Gastrocnemius medialis (tissue), 4 donors: ENCODE measurements at regions of chr21 and their contacts with region 1.

Region 1: GRCh38 chr21:34888569-34889319 is 160.4 kb downstream of the RUNX1 start:
- DNase-seq: peak; percentile 93 to 95
- ATAC-seq: peak; percentile 74 to 78
- H3K4me3 ChIP-seq: peak overlapping the region; percentile 69 to 95 (median 72)
- H3K27ac ChIP-seq: peak overlapping the region; percentile 76 to 91 (median 82)
- H3K4me1 ChIP-seq: peaks cover 12 to 30% of the 10 kb centered on the region in 2 donors
- H3K27me3 ChIP-seq: peaks cover 24 to 51% (median 51%) of the 10 kb centered on the region in 3 donors
- CTCF ChIP-seq: peak in 3 of 5 experiments; percentile 9 to 11 (median 10)
- POLR2A ChIP-seq: peak; percentile 94 to 97

Region 2: DNA sequence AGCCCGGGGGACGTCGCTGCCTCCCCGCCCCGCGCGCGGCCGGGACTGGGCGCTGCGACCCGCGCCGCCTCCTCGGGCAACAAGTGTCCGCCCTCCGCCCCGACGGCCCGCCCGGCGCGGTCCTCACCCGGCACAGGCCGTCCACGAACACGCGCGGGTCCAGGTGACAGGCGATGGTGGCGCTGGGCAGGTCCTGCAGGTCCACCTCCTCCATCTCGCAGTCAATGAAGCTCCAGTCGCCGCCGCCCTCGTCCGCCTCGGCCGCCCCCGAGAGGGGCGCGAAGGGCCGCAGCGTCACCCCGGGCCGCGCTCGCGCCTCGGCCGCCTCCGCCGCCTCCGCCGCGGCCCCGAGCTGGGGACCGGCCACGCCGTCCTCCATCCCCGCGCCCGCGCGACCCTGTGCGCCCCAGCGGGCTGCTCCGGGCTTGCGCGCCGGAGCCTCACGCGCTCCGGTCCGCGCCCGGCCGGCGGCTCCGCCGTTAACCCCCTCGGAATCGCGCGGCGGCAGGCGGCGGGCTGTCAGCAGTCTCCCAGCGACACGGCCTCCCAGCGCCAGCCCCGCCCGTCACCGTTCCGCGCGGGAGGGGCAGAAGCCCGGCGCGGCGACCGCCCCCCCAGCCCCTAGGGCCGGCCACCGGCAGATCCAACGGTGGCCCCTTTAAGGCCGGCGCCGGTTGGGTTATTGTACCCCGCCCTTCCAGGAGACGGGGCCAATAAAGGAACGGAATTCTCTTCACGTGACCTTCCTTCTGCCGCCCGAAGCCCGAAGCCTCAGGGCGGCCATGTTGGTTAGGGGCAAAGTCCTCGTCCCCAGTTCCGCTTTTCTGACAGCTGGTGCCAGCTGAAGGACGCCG is 273.9 kb before region 1 on chr21 and contains the start of gene RCAN1:
- in situ Hi-C with region 1: no loop called
- intact Hi-C with region 1: loop called (anchors 10 kb)
- DNase-seq: peak; percentile 89 to 94
- ATAC-seq: peak; percentile 98
- H3K4me3 ChIP-seq: peak within 1 kb of the TSS; percentile 56 to 73 (median 63)
- H3K27ac ChIP-seq: peak within 1 kb of the TSS; percentile 80 to 91 (median 88)
- H3K4me1 ChIP-seq: peaks cover 19 to 36% of the 10 kb centered on the region in 2 donors
- H3K27me3 ChIP-seq: no peaks in the 10 kb centered on the region
- CTCF ChIP-seq: peak in 1 of 5 experiments; percentile 13
- POLR2A ChIP-seq: peak; percentile 75 to 80
- total RNA-seq, gene RCAN1: 21.7 to 37.9 (median 33.2) TPM

Region 3: DNA sequence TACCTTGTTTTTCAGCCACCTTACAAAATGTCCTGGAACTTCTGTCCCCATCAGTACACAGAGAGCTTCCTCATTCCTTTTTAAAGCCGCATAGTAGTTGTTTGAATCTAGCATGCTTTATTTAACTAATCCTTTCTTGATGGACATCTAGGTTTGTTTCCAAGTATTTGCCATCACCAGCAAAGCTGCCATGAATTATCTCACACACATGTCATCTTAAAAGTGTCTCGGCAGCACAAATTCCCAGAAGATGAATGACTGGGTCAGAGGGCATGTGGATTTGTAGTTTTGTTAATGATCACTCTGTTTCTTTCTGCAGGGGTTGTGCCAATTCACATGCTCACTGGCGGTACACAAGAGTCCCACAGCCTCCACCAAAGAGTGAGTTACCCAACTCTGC is 151.6 kb before region 1 on chr21:
- in situ Hi-C with region 1: loop called in 1 of 4 experiments (anchors 10 kb)
- intact Hi-C with region 1: loop called (anchors 1 kb)
- DNase-seq: peak in 1 of 2 donors; percentile 9
- ATAC-seq: peak in 1 of 2 donors; percentile 57
- H3K4me3 ChIP-seq: no peak overlapping the region
- H3K27ac ChIP-seq: peak overlapping the region; percentile 42 to 90 (median 78)
- H3K4me1 ChIP-seq: peaks cover 23 to 41% of the 10 kb centered on the region in 2 donors
- H3K27me3 ChIP-seq: no peaks in the 10 kb centered on the region
- CTCF ChIP-seq: no peak
- POLR2A ChIP-seq: no peak

Region 4: DNA sequence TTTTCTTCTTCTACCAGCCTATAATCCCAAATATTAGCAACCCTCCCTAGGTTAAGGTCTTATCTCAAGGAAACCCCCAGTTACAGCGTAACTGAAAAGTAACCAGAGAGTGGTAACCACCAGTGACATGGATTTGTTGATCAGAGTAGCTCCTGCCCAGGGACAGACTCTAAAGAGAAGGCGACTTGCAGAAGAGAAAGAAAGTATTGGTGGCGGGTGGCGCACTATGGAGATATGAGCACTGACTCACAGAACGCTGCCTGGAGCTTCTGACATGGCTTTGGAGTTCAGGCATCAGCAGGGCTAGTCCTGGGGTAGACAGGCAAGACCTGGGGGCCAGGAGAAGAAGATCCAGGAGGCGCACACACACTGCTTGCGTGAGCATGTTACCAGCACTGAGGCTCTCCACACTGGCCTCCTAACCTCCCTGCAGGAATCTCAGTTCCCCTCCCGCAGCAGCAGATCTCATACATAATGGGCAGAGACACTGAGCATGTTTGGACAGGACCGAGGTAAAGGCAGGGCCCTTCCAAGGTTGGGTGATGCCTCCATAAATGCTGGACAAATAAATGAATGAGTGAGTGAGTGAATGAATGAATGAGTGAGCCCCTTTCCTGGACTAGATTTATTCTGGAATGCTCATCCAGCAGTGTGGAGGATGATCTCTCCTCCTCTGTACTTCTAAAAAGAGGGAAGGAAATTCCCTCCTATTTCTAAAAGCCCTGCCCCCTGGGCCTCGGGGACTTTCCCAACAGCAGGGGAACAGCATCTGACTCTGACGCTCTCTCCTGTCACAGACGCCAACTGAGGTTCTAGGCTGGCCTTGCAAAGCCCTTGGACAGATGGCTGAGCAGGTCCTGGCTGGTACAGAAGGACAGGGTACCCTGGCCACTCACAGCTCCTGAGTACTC is 44.5 kb before region 1 on chr21:
- in situ Hi-C with region 1: no loop called
- intact Hi-C with region 1: loop called (anchors 1 kb)
- DNase-seq: peak; percentile 86 to 93
- ATAC-seq: peak; percentile 65
- H3K4me3 ChIP-seq: peak overlapping the region in 2 of 4 donors; percentile 43 to 49
- H3K27ac ChIP-seq: peak overlapping the region; percentile 85 to 97 (median 92)
- H3K4me1 ChIP-seq: peaks cover 57 to 59% of the 10 kb centered on the region in 2 donors
- H3K27me3 ChIP-seq: no peaks in the 10 kb centered on the region
- CTCF ChIP-seq: no peak
- POLR2A ChIP-seq: peak; percentile 46 to 76

Region 5: GRCh38 chr21:35256467-35256988 is 367.8 kb after region 1 on chr21:
- in situ Hi-C with region 1: no loop called
- intact Hi-C with region 1: loop called (anchors 2 kb)
- DNase-seq: peak; percentile 96 to 99
- ATAC-seq: peak; percentile 82 to 88
- H3K4me3 ChIP-seq: no peak overlapping the region
- H3K27ac ChIP-seq: peak overlapping the region; percentile 84 to 91 (median 87)
- H3K4me1 ChIP-seq: peaks cover 49 to 61% of the 10 kb centered on the region in 2 donors
- H3K27me3 ChIP-seq: no peaks in the 10 kb centered on the region
- CTCF ChIP-seq: no peak
- POLR2A ChIP-seq: no peak

Region 6: DNA sequence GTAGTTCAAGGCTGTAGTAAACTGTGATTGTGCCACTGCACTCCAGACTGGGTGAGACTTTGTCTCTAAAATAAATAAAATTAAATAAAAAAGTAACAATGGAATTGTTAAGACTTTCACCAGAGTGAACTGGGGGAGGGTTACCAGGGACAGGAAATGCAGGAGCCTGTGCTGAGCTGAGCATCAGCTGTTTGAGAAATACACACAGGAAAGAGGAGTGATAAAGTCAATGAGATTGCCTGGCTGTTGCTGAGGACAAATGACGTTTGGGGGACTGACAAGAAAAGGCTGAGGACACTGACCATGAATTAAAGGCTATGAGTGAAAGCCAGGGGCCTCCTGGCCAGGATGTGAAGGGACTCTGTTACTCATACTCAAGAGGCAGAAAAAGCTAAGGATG is 945.2 kb after region 1 on chr21:
- in situ Hi-C with region 1: loop called in 1 of 4 experiments (anchors 10 kb)
- intact Hi-C with region 1: no loop called
- DNase-seq: no peak
- ATAC-seq: no peak
- H3K4me3 ChIP-seq: no peak overlapping the region
- H3K27ac ChIP-seq: no peak overlapping the region
- H3K4me1 ChIP-seq: no peaks in the 10 kb centered on the region
- H3K27me3 ChIP-seq: peaks cover 0 to 8% (median 0%) of the 10 kb centered on the region in 3 donors
- CTCF ChIP-seq: no peak
- POLR2A ChIP-seq: no peak

Region 7: GRCh38 chr21:36319765-36320420 is 1431.1 kb after region 1 on chr21 and contains the start of gene MORC3:
- in situ Hi-C with region 1: no loop called
- intact Hi-C with region 1: loop called (anchors 5 kb)
- DNase-seq: peak; percentile 95 to 98
- ATAC-seq: peak; percentile 96 to 97
- H3K4me3 ChIP-seq: peak within 1 kb of the TSS; percentile 67 to 87 (median 80)
- H3K27ac ChIP-seq: peak within 1 kb of the TSS; percentile 88 to 99 (median 94)
- H3K4me1 ChIP-seq: peaks cover 27 to 41% of the 10 kb centered on the region in 2 donors
- H3K27me3 ChIP-seq: no peaks in the 10 kb centered on the region
- CTCF ChIP-seq: no peak
- POLR2A ChIP-seq: peak; percentile 93 to 96
- total RNA-seq, gene MORC3: 28.1 to 35.5 (median 31.7) TPM